ENCODE measurements at regions of chr1 and their contacts with region 1.

Region 1: DNA sequence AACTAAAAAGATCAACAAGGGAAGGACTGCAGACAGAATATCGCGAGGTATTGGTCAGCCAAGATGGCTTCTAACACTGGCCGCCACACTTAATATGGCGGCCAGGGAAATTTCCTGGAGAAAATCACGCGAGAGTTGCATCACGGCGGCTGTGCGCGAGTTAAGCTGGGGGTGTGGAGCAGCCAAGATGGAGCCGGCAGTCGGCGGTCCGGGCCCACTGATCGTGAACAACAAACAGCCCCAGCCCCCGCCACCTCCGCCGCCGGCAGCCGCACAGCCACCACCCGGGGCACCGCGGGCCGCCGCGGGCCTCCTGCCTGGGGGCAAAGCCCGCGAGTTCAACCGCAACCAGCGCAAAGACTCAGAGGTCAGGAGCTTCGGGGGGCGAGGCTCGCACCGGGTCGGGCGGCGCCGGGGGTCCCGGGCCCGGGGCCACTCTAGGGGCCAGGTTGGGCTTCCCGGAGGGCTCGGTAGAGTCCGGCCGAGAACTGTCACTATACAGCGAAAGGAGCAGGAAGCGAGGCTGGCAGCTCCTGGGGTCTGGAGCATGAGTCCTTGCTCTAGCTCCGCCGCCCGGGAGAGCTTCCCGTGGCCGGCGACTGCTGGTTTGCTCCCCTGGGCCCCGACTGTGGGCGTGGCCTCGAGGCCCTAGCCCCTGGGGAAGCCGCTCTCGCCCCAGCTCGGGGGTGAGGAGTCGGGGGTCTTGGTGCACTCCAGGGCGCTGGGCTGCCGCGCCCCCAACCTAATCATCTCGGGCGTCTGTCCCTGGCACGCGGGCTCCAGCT is at the start of gene STRIP1:
- DNase-seq: peak; percentile 80 to 94
- ATAC-seq: peak; percentile 88 to 92
- H3K4me3 ChIP-seq: peak within 1 kb of the TSS; percentile 89
- H3K27ac ChIP-seq: peak within 1 kb of the TSS; percentile 93 to 99
- H3K4me1 ChIP-seq: peaks cover 12% of the 10 kb centered on the region; the same call in 2 of the 3 replicates
- CTCF ChIP-seq: no peak
- EP300 ChIP-seq: no peak
- POLR2A ChIP-seq: peak; percentile 61
- RAD21 ChIP-seq: no peak
- polyA plus RNA-seq, gene STRIP1: 16.4 and 20.2 TPM in 2 replicates

Region 2: DNA sequence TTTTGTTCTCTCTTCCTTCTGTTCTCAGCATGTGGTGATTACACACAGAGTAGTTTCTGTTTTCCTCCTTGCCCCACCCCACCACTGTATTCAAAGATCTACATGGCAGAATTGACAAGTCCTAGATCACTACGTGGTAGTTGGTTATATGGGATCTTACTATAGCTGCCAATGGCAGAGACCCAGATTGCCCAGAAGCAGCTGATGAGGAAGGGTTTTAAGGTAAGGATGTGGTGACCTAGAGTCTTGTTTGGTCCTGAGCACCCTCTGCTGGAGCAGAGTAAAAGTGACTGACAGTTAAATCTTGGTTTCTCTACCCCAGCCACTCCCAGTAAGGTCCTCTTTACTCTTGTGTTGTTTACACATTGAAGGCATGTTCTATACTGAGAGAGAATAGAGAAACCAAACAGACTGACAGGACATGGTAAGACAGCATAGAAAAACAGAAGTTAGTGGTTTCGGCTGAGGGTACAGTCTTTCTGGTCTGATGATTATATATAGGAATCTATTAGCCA is 23.1 kb before region 1 on chr1:
- CTCF ChIA-PET with region 1: interaction called, 35 read pairs
- POLR2A ChIA-PET with region 1: no interaction called
- DNase-seq: peak; percentile 56 to 61
- ATAC-seq: peak; percentile 92 to 97
- H3K4me3 ChIP-seq: no peak overlapping the region
- H3K27ac ChIP-seq: 0 out of 6 replicates have a peak overlapping the region, but pooled peaks of 1 of the 2 experiments have one; percentile 3
- H3K4me1 ChIP-seq: peaks cover 17% of the 10 kb centered on the region
- CTCF ChIP-seq: peak; percentile 53
- EP300 ChIP-seq: no peak
- POLR2A ChIP-seq: no peak
- RAD21 ChIP-seq: peak; percentile 59 to 65

Region 3: GRCh38 chr1:110019770-110020169 is 14.9 kb before region 1 on chr1:
- CTCF ChIA-PET with region 1: interaction called, 35 read pairs
- POLR2A ChIA-PET with region 1: interaction called, 3 read pairs
- DNase-seq: no peak
- ATAC-seq: no peak
- H3K4me3 ChIP-seq: no peak overlapping the region
- H3K27ac ChIP-seq: no peak overlapping the region
- H3K4me1 ChIP-seq: no peaks in the 10 kb centered on the region
- CTCF ChIP-seq: no peak
- EP300 ChIP-seq: no peak
- POLR2A ChIP-seq: no peak
- RAD21 ChIP-seq: no peak